ENCODE measurements at regions of chr16 and their contacts with region 1.

Region 1: DNA sequence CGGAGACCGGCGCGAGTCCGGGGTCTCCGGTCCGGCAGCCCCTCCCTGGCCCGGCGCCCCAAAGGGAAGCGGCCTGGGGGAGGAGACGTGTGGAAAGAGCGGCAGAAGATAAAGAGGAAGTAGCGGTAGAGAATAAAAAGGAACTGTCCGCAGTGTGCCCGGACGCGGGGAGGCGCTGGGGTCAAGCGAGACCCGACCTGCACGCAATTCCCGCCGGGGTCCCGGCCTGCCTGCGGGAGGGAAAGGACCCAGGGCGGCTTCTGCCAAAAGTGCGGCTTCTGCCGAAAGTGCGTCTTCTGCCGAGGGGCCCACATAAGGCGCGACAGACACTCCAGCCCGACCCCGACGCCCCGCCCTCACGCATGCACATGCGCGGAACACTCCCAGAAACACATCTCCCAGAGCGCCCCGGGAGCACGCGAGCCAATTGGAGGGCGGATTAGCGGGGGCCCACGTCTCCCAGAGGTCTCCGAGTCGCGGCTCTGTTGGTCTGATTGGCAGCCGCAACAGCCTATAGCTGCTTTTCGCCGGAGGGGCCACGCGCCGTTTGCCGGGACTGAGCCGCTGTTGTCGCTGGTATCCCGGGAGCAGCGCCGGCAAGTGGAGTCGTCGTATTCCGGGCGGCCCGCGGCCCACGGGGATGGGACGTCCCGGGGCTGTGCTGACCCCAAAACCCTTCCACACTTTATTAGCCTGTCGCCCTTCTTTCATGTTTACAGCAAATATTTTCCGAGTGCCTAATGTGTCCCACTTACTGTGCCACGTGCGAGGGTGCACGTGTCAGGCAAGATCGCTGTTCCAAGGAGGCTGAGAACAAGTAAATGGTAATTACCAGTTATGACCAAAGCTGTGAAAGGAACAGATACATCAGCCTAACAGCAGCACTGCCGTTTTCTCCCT is 8.0 kb upstream of the MEFV start:
- DNase-seq: peak; percentile 95 to 99 (median 97)
- ATAC-seq: peak; percentile 88
- H3K4me3 ChIP-seq: peak overlapping the region; percentile 82 to 91
- H3K4me3 Mint-ChIP-seq: peak overlapping the region; percentile 82
- H3K27ac ChIP-seq: peak overlapping the region; percentile 96 to 98
- H3K27ac Mint-ChIP-seq: peak overlapping the region; percentile 94
- H3K4me1 ChIP-seq: peaks cover 19% of the 10 kb centered on the region
- H3K4me1 Mint-ChIP-seq: peaks cover 43% of the 10 kb centered on the region
- H3K27me3 ChIP-seq: no peaks in the 10 kb centered on the region
- H3K27me3 Mint-ChIP-seq: no peaks in the 10 kb centered on the region
- CTCF ChIP-seq: no peak

Region 2: GRCh38 chr16:3150346-3151218 is 113.8 kb before region 1 on chr16:
- CTCF ChIA-PET with region 1: no interaction called
- POLR2A ChIA-PET with region 1: no interaction called
- intact Hi-C with region 1: loop called in 1 of 2 experiments (anchors 10 kb)
- DNase-seq: peak; percentile 94 to 100 (median 97)
- ATAC-seq: peak; percentile 82
- H3K4me3 ChIP-seq: peak overlapping the region; percentile 53 to 93
- H3K4me3 Mint-ChIP-seq: peak overlapping the region; percentile 88
- H3K27ac ChIP-seq: peak overlapping the region; percentile 53 to 68
- H3K27ac Mint-ChIP-seq: peak overlapping the region; percentile 88
- H3K4me1 ChIP-seq: peaks cover 23% of the 10 kb centered on the region
- H3K4me1 Mint-ChIP-seq: peaks cover 27% of the 10 kb centered on the region
- H3K27me3 ChIP-seq: no peaks in the 10 kb centered on the region
- H3K27me3 Mint-ChIP-seq: no peaks in the 10 kb centered on the region
- CTCF ChIP-seq: no peak

Region 3: GRCh38 chr16:3188925-3189825 is 75.2 kb before region 1 on chr16:
- CTCF ChIA-PET with region 1: interaction called, 7 read pairs
- POLR2A ChIA-PET with region 1: interaction called, 7 read pairs
- intact Hi-C with region 1: loop called in 1 of 2 experiments (anchors 5 kb)
- DNase-seq: peak in 4 of 9 experiments; percentile 46 to 59 (median 51)
- ATAC-seq: peak; percentile 41
- H3K4me3 ChIP-seq: peak overlapping the region; percentile 26 to 50
- H3K4me3 Mint-ChIP-seq: peak overlapping the region; percentile 70
- H3K27ac ChIP-seq: no peak overlapping the region
- H3K27ac Mint-ChIP-seq: no peak overlapping the region
- H3K4me1 ChIP-seq: peaks cover 38% of the 10 kb centered on the region
- H3K4me1 Mint-ChIP-seq: peaks cover 40% of the 10 kb centered on the region
- H3K27me3 ChIP-seq: peaks cover 50 to 55% of the 10 kb centered on the region in 2 experiments
- H3K27me3 Mint-ChIP-seq: peaks cover 66% of the 10 kb centered on the region
- CTCF ChIP-seq: no peak

Region 4: DNA sequence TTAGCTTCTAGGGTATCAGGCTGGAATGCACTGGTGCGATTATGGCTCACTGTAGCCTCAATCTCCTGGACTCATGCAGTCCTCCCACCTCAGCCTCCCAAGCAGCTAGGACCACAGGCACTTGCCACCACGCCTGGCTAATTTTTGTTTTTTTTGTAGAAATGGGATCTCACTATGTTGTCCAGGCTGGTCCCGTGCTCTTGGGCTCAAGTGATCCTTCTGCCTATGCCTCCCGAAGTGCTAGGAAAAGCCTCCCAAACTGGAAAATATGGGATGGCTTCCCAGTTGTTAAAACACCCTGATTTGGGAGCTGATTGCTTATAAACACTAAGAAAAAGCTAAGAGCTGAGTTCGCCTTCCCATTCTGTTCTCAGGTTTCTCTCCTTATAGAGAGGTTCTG is 12.3 kb after region 1 on chr16:
- CTCF ChIA-PET with region 1: interaction called, 12 read pairs
- POLR2A ChIA-PET with region 1: interaction called, 5 read pairs
- intact Hi-C with region 1: no loop called
- DNase-seq: no peak
- ATAC-seq: no peak
- H3K4me3 ChIP-seq: no peak overlapping the region
- H3K4me3 Mint-ChIP-seq: no peak overlapping the region
- H3K27ac ChIP-seq: no peak overlapping the region
- H3K27ac Mint-ChIP-seq: no peak overlapping the region
- H3K4me1 ChIP-seq: no peaks in the 10 kb centered on the region
- H3K4me1 Mint-ChIP-seq: peaks cover 11% of the 10 kb centered on the region
- H3K27me3 ChIP-seq: no peaks in the 10 kb centered on the region
- H3K27me3 Mint-ChIP-seq: no peaks in the 10 kb centered on the region
- CTCF ChIP-seq: no peak

Region 5: DNA sequence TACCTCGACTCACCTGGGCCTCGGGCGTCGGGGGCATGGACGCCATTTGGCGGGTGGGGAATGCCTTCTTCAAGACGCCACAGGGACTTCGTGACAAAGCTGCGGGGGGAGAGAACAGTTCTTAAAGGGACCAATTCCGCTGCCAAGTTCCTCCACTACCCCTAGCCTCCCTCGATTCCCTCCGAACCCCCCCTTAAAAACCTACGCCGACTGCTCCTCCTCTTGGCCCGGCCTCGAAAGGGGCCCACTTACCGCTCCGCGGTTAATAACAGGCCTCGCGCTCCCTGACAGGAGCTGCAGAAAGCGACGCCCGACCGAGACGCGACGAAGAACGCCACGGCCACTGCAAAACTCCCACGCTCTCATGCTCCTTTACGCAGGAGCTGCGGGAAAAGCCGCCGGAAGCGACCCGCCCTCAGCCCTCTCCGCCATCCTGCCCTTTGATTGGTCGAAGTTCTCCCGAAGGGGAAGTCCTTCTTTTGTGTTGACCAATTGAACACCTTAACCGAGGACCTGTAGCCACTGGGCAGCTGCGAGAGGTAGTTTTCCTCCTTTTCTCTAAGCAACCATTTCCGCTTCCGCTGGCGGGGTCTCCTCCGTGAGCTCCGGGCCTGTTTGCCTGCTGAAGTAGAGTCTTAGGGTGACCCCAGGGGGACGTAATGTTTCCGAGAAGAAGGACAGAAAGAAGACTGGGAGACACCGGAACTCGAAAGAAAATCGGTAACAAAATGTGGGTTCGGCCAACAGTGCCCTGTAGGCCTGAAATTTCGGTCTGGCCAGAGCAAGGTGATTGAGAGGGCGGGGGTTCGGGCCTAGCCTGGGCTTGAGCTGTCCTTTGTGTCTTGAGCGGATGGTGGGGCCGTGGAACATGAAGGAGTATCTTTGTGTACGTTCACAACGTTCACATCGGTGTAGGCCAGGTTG is 179.0 kb after region 1 on chr16 and contains the starts of genes NAA60 and ZNF597:
- CTCF ChIA-PET with region 1: interaction called, 7 read pairs
- POLR2A ChIA-PET with region 1: no interaction called
- intact Hi-C with region 1: loop called in 1 of 2 experiments (anchors 1 kb)
- DNase-seq: peak; percentile 41 to 92 (median 78)
- ATAC-seq: peak; percentile 89
- H3K4me3 ChIP-seq: peak within 1 kb of the TSS; percentile 51 to 75
- H3K4me3 Mint-ChIP-seq: peak within 1 kb of the TSS; percentile 94
- H3K27ac ChIP-seq: peak within 1 kb of the TSS; percentile 61 to 87
- H3K27ac Mint-ChIP-seq: peak within 1 kb of the TSS; percentile 96
- H3K4me1 ChIP-seq: peaks cover 13% of the 10 kb centered on the region
- H3K4me1 Mint-ChIP-seq: peaks cover 32% of the 10 kb centered on the region
- H3K27me3 ChIP-seq: no peaks in the 10 kb centered on the region
- H3K27me3 Mint-ChIP-seq: no peaks in the 10 kb centered on the region
- CTCF ChIP-seq: no peak
- total RNA-seq, gene NAA60: 45.4 to 48.0 TPM
- total RNA-seq, gene ZNF597: 4.5 to 4.6 TPM